HCT116 (cell line): ENCODE measurements at regions of chr1 and their contacts with region 1.

Region 1: GRCh38 chr1:7983086-7983778 is 21.7 kb downstream of the PARK7 start:
- DNase-seq: no peak
- ATAC-seq: no peak
- H3K4me3 ChIP-seq: no peak overlapping the region
- H3K27ac ChIP-seq: no peak overlapping the region
- H3K4me1 ChIP-seq: no peaks in the 10 kb centered on the region; a peak in 1 of 4 replicates
- H3K27me3 ChIP-seq: no peaks in the 10 kb centered on the region
- CTCF ChIP-seq: no peak
- POLR2A ChIP-seq: no peak
- RAD21 ChIP-seq: no peak

Region 2: GRCh38 chr1:7856345-7856744 is 126.9 kb before region 1 on chr1:
- CTCF ChIA-PET with region 1: no interaction called
- POLR2A ChIA-PET with region 1: no interaction called
- RAD21 ChIA-PET with region 1: no interaction called
- intact Hi-C with region 1: no loop called
- DNase-seq: no peak
- ATAC-seq: no peak
- H3K4me3 ChIP-seq: no peak overlapping the region
- H3K27ac ChIP-seq: no peak overlapping the region
- H3K4me1 ChIP-seq: no peaks in the 10 kb centered on the region
- H3K27me3 ChIP-seq: no peaks in the 10 kb centered on the region
- CTCF ChIP-seq: no peak
- POLR2A ChIP-seq: no peak
- RAD21 ChIP-seq: no peak

Region 3: GRCh38 chr1:8348777-8349491 is 365.7 kb after region 1 on chr1:
- CTCF ChIA-PET with region 1: interaction called, 4 read pairs
- POLR2A ChIA-PET with region 1: no interaction called
- RAD21 ChIA-PET with region 1: no interaction called
- intact Hi-C with region 1: loop called (anchors 1 kb)
- DNase-seq: peak; percentile 27
- ATAC-seq: peak; percentile 82
- H3K4me3 ChIP-seq: no peak overlapping the region
- H3K27ac ChIP-seq: no peak overlapping the region
- H3K4me1 ChIP-seq: peaks cover 3 to 26% of the 10 kb centered on the region in 2 experiments
- H3K27me3 ChIP-seq: no peaks in the 10 kb centered on the region
- CTCF ChIP-seq: peak; percentile 84 to 92 (median 87)
- POLR2A ChIP-seq: no peak
- RAD21 ChIP-seq: peak; percentile 98